Colonic mucosa (tissue), 4 donors: ENCODE measurements at regions of chr11 and their contacts with region 1.

Region 1: GRCh38 chr11:133834682-133835592 is 10.4 kb downstream of the SPATA19 start:
- DNase-seq: no peak
- H3K4me3 ChIP-seq: no peak overlapping the region
- H3K27ac ChIP-seq: no peak overlapping the region
- H3K4me1 ChIP-seq: no peaks in the 10 kb centered on the region
- H3K27me3 ChIP-seq: no peaks in the 10 kb centered on the region
- CTCF ChIP-seq: peak; percentile 29

Region 2: DNA sequence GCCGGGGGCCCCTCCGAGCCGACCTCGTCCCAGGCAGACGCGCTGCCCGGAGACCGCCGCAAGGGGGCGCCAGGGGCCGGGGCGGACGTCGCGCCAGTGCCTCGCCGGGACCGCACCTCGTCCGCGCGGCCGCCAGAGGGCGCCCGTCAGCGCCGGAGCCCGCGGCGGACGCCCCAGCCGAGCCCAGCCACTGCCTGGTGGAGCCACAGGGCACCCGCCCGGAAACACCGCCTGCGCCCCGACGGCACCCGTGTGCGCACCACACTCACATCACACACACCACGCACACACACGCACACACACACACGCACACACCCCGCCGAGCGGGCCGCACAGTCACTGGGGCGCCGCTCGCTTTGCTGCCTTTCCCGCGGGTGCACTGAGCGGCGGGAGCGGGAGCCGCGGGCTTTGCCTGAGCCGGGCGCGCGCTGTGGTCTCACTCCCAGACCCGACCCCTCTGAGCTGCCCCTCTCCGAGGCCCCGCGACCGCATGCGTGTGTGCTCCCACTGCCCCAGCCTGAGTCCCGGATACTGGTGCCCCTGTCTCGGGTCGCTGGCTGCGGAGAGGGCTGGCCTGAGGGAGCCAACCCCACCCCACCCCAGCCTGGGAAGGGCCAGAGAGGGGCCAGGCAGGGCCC is 752.0 kb before region 1 on chr11:
- intact Hi-C with region 1: loop called (anchors 5 kb)
- DNase-seq: peak; percentile 43
- H3K4me3 ChIP-seq: peak overlapping the region; percentile 27
- H3K27ac ChIP-seq: no peak overlapping the region
- H3K4me1 ChIP-seq: no peaks in the 10 kb centered on the region
- H3K27me3 ChIP-seq: peaks cover 4% of the 10 kb centered on the region
- CTCF ChIP-seq: peak; percentile 44

Region 3: DNA sequence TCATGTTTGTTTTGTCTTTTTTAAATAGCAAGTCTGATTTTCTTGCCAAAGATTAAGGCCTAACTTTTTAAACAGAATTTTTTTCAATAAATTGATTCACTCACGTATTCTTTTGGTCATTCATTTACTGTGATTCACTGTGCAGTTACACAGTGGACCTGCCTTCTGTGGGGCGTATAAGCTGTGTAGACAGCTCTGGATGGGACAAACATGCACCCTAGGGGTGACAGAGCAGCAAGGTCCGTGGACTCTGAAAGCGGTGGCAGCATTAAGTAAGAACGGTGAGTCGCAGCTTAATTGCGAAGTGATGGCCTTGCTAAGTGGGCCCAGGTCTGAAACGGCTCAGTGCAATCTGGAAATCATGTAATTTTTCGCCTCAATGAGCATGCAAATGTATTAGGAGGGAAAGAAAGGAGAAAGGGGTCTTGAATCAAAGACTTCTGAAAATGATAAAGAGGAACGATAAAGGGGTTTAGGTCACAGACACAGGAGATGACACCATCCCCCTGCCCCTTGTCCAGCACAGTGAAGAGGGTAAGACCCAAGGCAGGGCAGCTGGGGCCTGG is 102.7 kb before region 1 on chr11:
- intact Hi-C with region 1: no loop called
- DNase-seq: no peak
- H3K4me3 ChIP-seq: no peak overlapping the region
- H3K27ac ChIP-seq: no peak overlapping the region
- H3K4me1 ChIP-seq: no peaks in the 10 kb centered on the region
- H3K27me3 ChIP-seq: no peaks in the 10 kb centered on the region
- CTCF ChIP-seq: no peak

Region 4: GRCh38 chr11:133995066-133995465 is 160.1 kb after region 1 on chr11:
- intact Hi-C with region 1: no loop called
- DNase-seq: no peak
- H3K4me3 ChIP-seq: no peak overlapping the region
- H3K27ac ChIP-seq: no peak overlapping the region
- H3K4me1 ChIP-seq: no peaks in the 10 kb centered on the region
- H3K27me3 ChIP-seq: no peaks in the 10 kb centered on the region
- CTCF ChIP-seq: no peak